Activated T-helper 1 cell treated with anti-CD3 and anti-CD28 coated beads, Interleukin-12 subunit alpha, Interleukin-12 subunit beta, Interleukin-2, Interleukin-4 antibody, amounts not matched to agents 30 ng/mL and 10 ng/mL and 1 ng/mL, durations not matched to agents 14 hours and 24 hours and 36 hours (primary cell): ENCODE measurements at regions of chr6 and their contacts with region 1.

Region 1: GRCh38 chr6:107820338-107821261 is 3.5 kb downstream of the SCML4 start:
- DNase-seq: peak; percentile 27
- H3K4me3 Mint-ChIP-seq: peak overlapping the region; percentile 83
- H3K27ac Mint-ChIP-seq: peak overlapping the region; percentile 97
- H3K4me1 Mint-ChIP-seq: peaks cover 88% of the 10 kb centered on the region
- H3K27me3 Mint-ChIP-seq: no peaks in the 10 kb centered on the region

Region 2: GRCh38 chr6:106519460-106520394 is 1300.9 kb before region 1 on chr6:
- intact Hi-C with region 1: loop called (anchors 5 kb)
- DNase-seq: peak; percentile 74
- H3K4me3 Mint-ChIP-seq: peak overlapping the region; percentile 90
- H3K27ac Mint-ChIP-seq: peak overlapping the region; percentile 98
- H3K4me1 Mint-ChIP-seq: peaks cover 79% of the 10 kb centered on the region
- H3K27me3 Mint-ChIP-seq: no peaks in the 10 kb centered on the region

Region 3: DNA sequence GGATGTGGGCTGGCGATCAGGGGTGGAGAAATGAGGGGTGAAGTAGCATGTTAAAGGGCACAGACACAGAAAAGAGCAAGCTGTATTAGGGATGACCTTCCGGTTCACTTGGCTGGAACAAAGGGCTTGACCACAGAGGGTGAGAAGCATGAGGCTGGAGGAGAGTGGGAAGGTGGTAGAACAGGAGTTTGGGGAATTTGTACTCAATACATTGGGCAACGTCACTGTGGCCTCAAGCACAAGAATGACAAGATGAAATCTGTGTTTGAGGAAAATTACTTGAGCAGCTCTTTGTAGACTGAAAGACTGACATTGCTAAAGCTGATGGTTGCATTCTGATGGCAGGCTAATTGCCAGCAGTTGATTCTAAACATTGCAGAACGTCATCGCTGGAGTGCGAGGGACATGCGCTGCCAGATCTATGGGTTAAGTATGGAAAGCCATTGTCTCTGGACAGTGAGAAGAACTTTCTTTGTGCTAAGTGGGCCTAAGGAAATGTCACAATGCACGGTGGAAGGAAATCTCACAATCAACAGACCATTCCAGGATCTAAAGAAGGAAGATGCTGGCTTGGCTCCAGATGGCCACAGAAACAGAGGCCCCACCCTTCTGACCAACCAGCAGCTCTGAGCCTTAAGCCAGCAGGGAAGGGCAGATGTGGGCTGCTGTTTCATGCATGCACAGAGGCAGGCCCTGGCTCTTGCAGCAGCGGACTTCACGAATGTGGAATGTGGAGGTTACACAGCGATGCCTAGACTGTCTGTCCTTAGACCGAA is 174.6 kb before region 1 on chr6:
- intact Hi-C with region 1: no loop called
- DNase-seq: no peak
- H3K4me3 Mint-ChIP-seq: no peak overlapping the region
- H3K27ac Mint-ChIP-seq: no peak overlapping the region
- H3K4me1 Mint-ChIP-seq: no peaks in the 10 kb centered on the region
- H3K27me3 Mint-ChIP-seq: peaks cover 23% of the 10 kb centered on the region

Region 4: DNA sequence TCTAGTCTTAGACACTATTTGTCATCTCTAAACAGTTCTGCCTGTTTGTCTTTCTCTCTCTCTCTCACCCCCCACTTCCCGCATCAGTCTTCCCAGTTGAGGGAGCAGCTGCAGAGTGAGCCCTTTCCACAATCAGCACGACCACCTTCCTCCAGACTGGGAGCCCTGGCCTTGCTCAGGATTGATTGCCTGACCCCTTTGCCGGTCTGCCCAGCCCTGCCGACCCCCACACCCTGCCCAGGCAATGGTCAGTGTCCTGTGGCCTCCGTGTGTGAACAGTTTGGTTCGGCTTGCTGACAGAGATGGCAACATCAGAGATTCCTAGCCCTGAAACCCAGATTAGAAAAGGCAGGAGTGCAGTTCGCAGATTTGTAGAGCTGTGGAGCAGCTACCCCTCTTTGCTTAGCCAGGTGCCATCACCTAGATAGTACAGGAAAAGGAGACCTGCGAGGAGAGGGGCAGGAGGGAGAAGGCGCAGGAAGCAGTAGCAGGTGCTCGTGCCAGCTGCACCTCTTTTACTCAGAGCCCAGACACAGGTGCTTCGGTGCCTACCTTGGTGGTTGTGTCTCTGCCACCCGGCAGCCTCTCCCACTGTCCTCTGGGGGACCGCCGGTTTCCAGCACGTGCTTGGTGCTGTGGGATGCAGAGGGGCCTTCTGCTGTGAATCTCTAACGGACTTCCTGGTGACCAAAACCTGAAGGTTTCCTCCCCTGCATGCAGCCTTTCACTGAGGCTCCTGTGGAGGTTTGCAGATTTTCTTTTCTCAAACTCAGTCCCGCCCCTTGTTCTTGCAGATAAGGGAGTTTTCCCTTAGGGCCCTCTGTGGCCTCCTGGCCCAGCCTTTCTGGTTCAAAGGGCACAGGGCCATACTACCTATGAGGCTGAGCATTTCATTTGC is 88.9 kb before region 1 on chr6:
- intact Hi-C with region 1: loop called (anchors 1 kb)
- DNase-seq: no peak
- H3K4me3 Mint-ChIP-seq: peak overlapping the region; percentile 75
- H3K27ac Mint-ChIP-seq: peak overlapping the region; percentile 21
- H3K4me1 Mint-ChIP-seq: peaks cover 78% of the 10 kb centered on the region
- H3K27me3 Mint-ChIP-seq: peaks cover 19% of the 10 kb centered on the region

Region 5: DNA sequence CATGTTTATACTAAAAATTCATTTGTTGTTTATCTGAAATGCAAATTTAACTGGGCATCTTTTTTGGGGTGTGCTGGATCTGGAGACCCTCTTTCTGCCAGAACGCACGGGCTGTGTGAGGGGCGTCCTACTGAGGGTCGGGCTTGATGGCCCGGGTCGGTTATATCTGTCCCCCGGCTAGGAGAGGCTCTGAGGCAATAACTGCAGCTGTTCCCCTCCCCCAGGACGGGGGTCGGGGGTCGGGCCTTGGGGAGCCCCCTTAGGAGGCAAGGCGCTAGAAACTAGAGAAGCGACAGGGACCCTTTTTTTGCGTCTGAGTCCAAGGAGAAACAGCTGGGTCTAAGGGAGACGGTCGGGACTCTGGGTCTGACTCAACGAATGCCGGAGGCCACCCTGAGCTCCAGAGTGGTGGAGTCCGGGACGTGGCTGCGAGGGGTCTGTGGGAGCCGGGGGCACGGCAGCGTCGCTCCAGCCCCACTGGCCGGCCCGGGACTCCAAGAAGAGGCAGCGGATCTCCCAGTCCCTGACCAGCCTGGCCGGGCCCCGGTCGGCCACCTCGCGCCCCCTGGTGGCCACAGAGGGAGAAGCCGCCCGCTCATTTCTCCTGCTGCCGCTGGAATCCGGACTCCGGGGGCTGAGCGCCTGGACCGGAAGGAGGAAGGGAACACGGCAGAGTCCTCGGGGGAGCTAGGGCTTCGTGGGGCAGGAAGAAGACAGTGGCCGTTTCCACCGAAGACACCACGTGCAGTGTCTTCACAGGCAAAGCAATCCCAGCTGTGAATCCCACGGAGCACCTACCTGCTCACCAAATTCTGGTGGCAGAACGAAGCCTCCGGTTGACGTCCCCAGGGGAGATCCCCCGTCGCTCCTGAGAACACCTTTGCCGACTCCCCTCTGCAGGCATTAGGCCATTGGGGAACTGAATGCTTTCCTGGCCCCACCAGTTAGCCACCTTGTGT is 27.5 kb after region 1 on chr6:
- intact Hi-C with region 1: loop called (anchors 1 kb)
- DNase-seq: peak; percentile 74
- H3K4me3 Mint-ChIP-seq: peak overlapping the region; percentile 69
- H3K27ac Mint-ChIP-seq: no peak overlapping the region
- H3K4me1 Mint-ChIP-seq: peaks cover 30% of the 10 kb centered on the region
- H3K27me3 Mint-ChIP-seq: peaks cover 15% of the 10 kb centered on the region

Region 6: DNA sequence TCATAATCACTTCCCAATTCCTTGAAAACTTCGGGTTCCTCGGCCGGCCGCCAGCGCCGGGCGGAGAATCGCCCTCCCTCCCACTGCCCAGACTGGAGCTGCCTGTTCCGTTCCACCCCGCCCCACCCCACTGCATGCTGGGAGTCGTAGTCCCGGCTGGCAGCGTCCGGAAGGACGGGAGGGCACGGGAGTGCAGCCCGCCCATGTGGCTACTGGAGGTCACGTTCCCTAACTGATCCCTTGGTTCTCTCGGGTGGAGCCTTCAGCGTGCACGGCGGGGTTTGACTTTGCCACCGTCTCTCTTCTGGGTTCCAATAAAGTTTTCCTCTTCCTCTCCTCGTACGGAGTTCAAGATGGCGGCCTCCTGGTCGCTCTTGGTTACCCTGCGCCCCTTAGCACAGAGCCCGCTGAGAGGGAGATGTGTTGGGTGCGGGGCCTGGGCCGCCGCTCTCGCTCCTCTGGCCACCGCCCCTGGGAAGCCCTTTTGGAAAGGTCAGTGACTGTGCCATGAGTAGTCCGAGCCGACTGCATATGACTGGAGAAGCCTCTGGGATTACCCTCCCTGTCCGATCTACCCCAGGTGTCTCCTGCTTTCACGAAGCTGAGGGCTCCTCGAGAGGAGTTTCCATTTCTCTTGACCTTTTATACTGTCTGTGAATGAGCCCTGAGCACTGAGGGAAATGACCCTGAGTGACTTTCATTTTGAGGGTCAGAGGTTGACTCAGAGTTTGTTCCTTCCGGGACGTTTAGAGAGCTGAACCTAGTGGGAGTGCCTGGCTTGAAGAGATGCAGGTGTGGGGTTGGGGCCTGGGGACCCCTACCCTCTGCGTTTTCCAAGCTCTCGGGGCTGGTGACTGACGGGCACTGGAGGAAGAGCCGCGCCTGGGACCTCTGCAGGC is 474.4 kb after region 1 on chr6 and contains the start of gene AFG1L:
- intact Hi-C with region 1: loop called (anchors 10 kb)
- DNase-seq: peak; percentile 82
- H3K4me3 Mint-ChIP-seq: peak within 1 kb of the TSS; percentile 100
- H3K27ac Mint-ChIP-seq: peak within 1 kb of the TSS; percentile 100
- H3K4me1 Mint-ChIP-seq: peaks cover 26% of the 10 kb centered on the region
- H3K27me3 Mint-ChIP-seq: peaks cover 2% of the 10 kb centered on the region
- total RNA-seq, gene AFG1L: 4.3 and 6.0 TPM in 2 replicates

Region 7: GRCh38 chr6:109482905-109483735 is 1662.5 kb after region 1 on chr6 and contains the start of gene ZBTB24:
- intact Hi-C with region 1: loop called (anchors 5 kb)
- DNase-seq: peak; percentile 87
- H3K4me3 Mint-ChIP-seq: peak within 1 kb of the TSS; percentile 98
- H3K27ac Mint-ChIP-seq: peak within 1 kb of the TSS; percentile 92
- H3K4me1 Mint-ChIP-seq: peaks cover 47% of the 10 kb centered on the region
- H3K27me3 Mint-ChIP-seq: peaks cover 1% of the 10 kb centered on the region
- total RNA-seq, gene ZBTB24: 19.5 and 20.8 TPM in 2 replicates